ENCODE measurements at regions of chr1 and their contacts with region 1.

Region 1: DNA sequence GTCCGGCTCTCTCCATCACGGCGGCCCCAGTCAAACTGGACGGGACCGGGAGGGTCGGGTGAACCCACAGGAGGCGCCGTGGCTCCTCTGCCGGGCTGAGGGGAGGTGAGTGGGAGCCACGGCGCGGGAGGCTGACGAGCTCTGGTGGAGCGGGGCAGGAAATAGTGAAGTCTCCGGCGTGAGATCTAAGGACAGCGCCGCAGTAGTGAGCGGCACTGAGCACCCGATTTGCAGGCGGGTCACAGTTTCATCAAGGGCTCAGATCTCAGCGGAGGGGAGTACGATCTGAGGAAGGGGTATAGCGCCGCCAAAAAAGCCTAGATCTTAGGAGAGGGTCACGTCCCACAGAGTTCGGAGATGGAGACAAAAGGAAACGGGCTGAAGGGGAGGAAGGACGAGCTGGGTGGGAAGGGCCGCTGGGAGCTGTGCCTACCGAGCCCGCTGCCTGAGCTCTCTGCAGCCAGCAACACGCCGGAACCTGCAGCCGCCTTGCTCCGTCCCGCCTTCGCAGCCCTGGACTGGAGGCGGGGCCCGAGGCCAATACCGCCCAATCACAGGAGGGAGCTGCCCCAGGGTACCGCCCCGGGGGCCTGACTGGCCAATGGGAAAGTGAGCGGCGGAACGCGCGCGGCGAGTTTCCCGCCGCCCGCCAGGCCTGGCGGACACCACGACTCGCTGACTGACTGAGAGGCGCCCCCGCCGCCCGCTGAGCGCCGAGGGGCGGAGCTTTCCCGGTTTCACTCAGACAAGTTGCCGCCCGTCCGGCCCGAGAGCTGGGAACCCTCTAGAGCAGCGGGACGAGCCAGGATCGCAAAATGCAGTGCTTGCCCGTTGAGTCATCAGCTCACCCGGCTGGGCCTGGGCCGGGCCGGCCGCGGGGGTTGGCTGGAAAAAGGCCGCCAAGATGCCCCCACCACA is 1.9 kb downstream of the SFN start:
- DNase-seq: peak; percentile 95
- ATAC-seq: peak; percentile 72
- H3K4me3 ChIP-seq: peak overlapping the region; percentile 88 to 96
- H3K27ac ChIP-seq: peak overlapping the region; percentile 100
- H3K4me1 ChIP-seq: peaks cover 42 to 62% of the 10 kb centered on the region in 2 experiments
- H3K27me3 ChIP-seq: no peaks in the 10 kb centered on the region
- CTCF ChIP-seq: no peak
- POLR2A ChIP-seq: peak; percentile 95
- RAD21 ChIP-seq: no peak

Region 2: GRCh38 chr1:26695356-26696118 is 169.3 kb before region 1 on chr1 and contains the start of gene ARID1A:
- CTCF ChIA-PET with region 1: no interaction called
- POLR2A ChIA-PET with region 1: interaction called, 5 read pairs
- RAD21 ChIA-PET with region 1: no interaction called
- intact Hi-C with region 1: loop called (anchors 10 kb)
- DNase-seq: peak; percentile 92
- ATAC-seq: peak; percentile 51
- H3K4me3 ChIP-seq: peak within 1 kb of the TSS; percentile 60 to 64
- H3K27ac ChIP-seq: peak within 1 kb of the TSS; percentile 94
- H3K4me1 ChIP-seq: peaks cover 27 to 76% of the 10 kb centered on the region in 2 experiments
- H3K27me3 ChIP-seq: no peaks in the 10 kb centered on the region
- CTCF ChIP-seq: no peak
- POLR2A ChIP-seq: no peak
- RAD21 ChIP-seq: no peak
- total RNA-seq, gene ARID1A: 62.8 TPM

Region 3: DNA sequence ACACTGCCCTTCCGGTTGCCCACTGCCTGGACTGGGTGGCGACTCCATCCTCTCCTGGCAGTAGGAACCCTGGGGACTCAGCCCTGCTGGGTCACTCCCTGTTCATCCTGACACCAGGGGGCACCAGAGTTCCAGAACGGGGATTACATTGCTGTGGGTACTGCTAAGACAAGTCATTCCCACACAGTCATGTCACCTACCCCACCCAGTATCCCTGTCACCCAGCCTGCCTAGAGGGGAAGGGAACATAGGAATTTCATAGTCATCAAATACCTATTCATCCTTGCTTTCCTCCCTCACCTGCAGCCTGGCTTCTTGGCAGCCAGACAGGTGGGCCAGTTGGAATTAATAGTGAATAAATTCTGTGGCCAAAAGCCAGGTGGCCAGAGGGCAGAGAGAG is 11.7 kb before region 1 on chr1:
- CTCF ChIA-PET with region 1: interaction called, 14 read pairs
- POLR2A ChIA-PET with region 1: interaction called, 29 read pairs
- RAD21 ChIA-PET with region 1: interaction called in 1 of 2 experiments, 3 read pairs
- intact Hi-C with region 1: loop called (anchors 1 kb)
- DNase-seq: peak; percentile 84
- ATAC-seq: peak; percentile 85
- H3K4me3 ChIP-seq: no peak overlapping the region
- H3K27ac ChIP-seq: peak overlapping the region; percentile 51
- H3K4me1 ChIP-seq: peaks cover 37 to 73% of the 10 kb centered on the region in 2 experiments
- H3K27me3 ChIP-seq: no peaks in the 10 kb centered on the region
- CTCF ChIP-seq: peak in 2 of 3 experiments; percentile 92; a peak in 4 of 6 replicates
- POLR2A ChIP-seq: no peak
- RAD21 ChIP-seq: no peak

Region 4: GRCh38 chr1:26986658-26987057 is 121.8 kb after region 1 on chr1:
- CTCF ChIA-PET with region 1: no interaction called
- POLR2A ChIA-PET with region 1: no interaction called
- RAD21 ChIA-PET with region 1: no interaction called
- intact Hi-C with region 1: no loop called
- DNase-seq: no peak
- ATAC-seq: no peak
- H3K4me3 ChIP-seq: no peak overlapping the region
- H3K27ac ChIP-seq: no peak overlapping the region; the same call in 1 of the 2 replicates
- H3K4me1 ChIP-seq: peaks cover 26 to 42% of the 10 kb centered on the region in 2 experiments
- H3K27me3 ChIP-seq: no peaks in the 10 kb centered on the region
- CTCF ChIP-seq: no peak
- POLR2A ChIP-seq: no peak
- RAD21 ChIP-seq: no peak